ENCODE measurements at regions of chr7 and their contacts with region 1.

Region 1: DNA sequence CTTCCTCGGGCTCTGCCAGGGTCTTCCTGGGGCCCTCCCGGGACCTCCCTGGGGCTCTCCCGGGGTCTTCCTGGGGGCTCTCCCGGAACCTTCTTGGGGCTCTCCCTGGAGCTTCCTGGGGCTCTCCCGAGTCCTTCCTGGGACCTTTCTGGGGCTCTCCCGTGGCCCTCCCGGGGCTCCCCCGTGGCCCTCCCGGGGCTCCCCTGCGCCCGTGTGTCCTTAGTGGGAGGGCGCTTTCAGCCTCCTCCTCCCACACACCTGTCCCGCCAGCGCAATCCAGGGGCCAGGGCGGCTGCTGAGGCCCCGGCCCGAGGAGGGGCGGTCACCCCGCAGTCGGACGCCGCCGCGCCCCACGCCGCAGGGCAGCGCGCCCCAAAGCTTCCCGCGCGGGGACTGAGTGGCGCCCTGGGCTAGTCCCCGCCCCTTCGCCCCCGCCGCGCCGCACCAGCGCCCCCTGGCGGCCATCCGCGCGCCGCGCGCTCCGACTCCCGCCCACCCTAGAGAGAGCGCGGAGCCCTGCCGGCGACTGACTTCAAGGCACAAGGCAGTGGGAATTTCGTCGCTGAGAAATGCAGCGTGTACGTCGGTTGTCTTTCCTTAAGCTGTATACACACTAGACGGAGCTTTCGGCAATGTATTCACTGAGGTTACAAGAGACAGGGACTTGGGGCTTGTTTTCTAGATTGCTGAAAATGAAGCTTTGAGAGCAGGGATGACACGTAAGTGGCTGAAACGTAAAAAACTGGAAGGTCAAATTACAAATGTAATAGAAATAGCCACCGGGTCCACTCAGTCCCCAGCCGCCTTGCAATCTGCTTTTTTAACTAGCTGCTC is 47.1 kb downstream of the INSIG1 start:
- DNase-seq: peak; percentile 90
- ATAC-seq: peak; percentile 97
- H3K4me3 ChIP-seq: peak overlapping the region; percentile 43
- H3K27ac ChIP-seq: no peak overlapping the region
- H3K4me1 ChIP-seq: no peaks in the 10 kb centered on the region
- H3K27me3 ChIP-seq: peaks cover 5% of the 10 kb centered on the region
- CTCF ChIP-seq: peak; percentile 76

Region 2: GRCh38 chr7:154927624-154928143 is 417.1 kb before region 1 on chr7:
- intact Hi-C with region 1: loop called (anchors 10 kb)
- DNase-seq: no peak
- ATAC-seq: peak; percentile 87
- H3K4me3 ChIP-seq: peak overlapping the region; percentile 62
- H3K27ac ChIP-seq: peak overlapping the region; percentile 87
- H3K4me1 ChIP-seq: no peaks in the 10 kb centered on the region
- H3K27me3 ChIP-seq: no peaks in the 10 kb centered on the region
- CTCF ChIP-seq: peak; percentile 72

Region 3: DNA sequence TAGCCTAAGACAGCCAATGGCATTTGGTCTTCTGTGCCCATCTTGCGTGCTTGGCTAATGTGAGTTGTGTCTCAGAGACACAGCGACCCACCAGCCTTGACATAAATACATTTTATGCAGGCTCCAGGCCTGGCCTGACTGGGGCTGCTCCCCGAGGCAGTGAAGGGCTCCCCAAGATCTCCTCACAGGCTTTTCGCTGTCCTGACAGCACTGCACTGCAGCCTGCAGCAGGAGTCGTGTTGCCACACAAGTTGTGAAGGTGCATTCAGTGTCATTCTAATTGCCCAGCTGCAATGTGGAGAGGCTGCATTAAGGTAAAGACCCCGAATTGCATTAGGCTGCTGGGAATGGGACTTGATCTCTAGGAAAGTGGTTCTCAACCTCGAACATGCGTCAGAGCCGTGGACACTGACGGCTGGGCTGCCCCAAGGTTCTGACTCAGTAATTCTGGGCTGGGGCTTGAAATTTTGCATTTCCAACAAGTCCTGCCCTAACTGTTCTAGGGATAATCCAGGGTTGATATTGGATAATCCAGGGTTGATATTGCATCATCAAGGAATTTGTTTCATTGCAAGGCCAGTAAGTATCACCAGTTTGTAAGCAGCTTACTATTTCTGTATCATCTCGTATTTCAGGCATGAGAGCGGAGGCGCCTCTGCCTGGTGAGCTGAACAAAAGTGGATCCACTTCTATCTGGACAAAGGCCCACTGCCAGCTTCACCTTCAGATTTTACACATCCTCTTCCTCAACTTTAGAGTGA is 155.8 kb before region 1 on chr7:
- intact Hi-C with region 1: loop called (anchors 10 kb)
- DNase-seq: no peak
- ATAC-seq: no peak
- H3K4me3 ChIP-seq: no peak overlapping the region
- H3K27ac ChIP-seq: no peak overlapping the region
- H3K4me1 ChIP-seq: no peaks in the 10 kb centered on the region
- H3K27me3 ChIP-seq: peaks cover 7% of the 10 kb centered on the region
- CTCF ChIP-seq: no peak

Measured in upper lobe of right lung (tissue), 1 donor.